Heart right ventricle (tissue), 16 donors: ENCODE measurements at regions of chr6 and their contacts with region 1.

Region 1: DNA sequence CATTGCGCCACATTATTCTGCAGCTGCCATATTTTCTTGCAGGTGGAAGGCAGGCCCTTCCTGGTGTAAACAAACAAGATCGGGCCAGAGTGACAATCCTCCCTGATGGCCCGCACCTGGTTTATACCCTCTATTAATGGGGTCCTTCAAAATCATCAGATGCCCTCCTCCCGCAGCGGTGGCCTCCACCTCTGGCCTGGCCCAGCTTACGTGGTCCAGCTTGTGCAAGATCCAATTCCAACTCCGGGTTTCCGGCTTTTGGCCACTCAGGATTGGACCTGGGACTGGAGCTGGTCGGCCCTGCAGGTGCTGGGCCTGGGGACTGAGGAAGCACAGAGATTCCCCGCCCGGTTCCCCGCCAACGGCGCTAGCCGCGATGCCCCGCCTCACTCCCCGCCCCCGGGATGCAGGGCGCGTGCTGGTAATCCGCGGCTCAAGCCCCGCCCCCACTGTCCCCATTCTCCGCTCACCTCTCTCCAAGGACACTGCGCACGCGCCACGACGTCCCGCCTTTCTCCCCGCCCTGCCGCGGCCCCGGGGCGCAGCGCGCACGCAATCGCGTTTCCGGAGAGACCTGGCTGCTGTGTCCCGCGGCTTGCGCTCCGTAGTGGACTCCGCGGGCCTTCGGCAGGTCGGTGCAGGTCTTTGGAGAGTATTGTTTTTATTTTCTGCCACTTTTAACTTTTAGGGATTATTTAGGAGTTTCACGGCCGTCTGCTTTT is at the start of gene TMEM14B:
- DNase-seq: peak; percentile 100
- ATAC-seq: peak; percentile 99 to 100 (median 99)
- H3K4me3 ChIP-seq: peak within 1 kb of the TSS; percentile 59 to 82 (median 74)
- H3K27ac ChIP-seq: peak within 1 kb of the TSS in 9 of 10 donors; percentile 72 to 91 (median 84)
- H3K4me1 ChIP-seq: peaks cover 8 to 40% (median 25%) of the 10 kb centered on the region in 9 donors
- H3K27me3 ChIP-seq: no peaks in the 10 kb centered on the region
- CTCF ChIP-seq: no peak
- total RNA-seq, gene TMEM14B: 93.5 to 116 (median 108) TPM

Region 2: GRCh38 chr6:10722820-10723566 is 24.4 kb before region 1 on chr6 and contains the start of gene TMEM14C:
- intact Hi-C with region 1: loop called in 6 of 10 experiments (anchors 1 to 2 kb)
- DNase-seq: peak; percentile 99
- ATAC-seq: peak; percentile 97 to 99 (median 98)
- H3K4me3 ChIP-seq: peak within 1 kb of the TSS; percentile 26 to 96 (median 78)
- H3K27ac ChIP-seq: peak within 1 kb of the TSS; percentile 44 to 96 (median 90)
- H3K4me1 ChIP-seq: peaks cover 18 to 56% (median 34%) of the 10 kb centered on the region in 9 donors
- H3K27me3 ChIP-seq: no peaks in the 10 kb centered on the region
- CTCF ChIP-seq: peak in 2 of 9 donors; percentile 4 to 5
- total RNA-seq, gene TMEM14C: 105 to 133 (median 116) TPM